ENCODE measurements at regions of chr15 and their contacts with region 1.

Region 1: GRCh38 chr15:36883713-36884517 is 216.4 kb downstream of the MEIS2 start:
- DNase-seq: peak; percentile 93
- H3K4me3 ChIP-seq: peak overlapping the region; percentile 68
- H3K27ac ChIP-seq: no peak overlapping the region
- H3K4me1 ChIP-seq: peaks cover 14% of the 10 kb centered on the region
- H3K27me3 ChIP-seq: 0 out of 2 replicates have a peak, but pooled peaks cover 11% of the 10 kb centered on the region

Region 2: DNA sequence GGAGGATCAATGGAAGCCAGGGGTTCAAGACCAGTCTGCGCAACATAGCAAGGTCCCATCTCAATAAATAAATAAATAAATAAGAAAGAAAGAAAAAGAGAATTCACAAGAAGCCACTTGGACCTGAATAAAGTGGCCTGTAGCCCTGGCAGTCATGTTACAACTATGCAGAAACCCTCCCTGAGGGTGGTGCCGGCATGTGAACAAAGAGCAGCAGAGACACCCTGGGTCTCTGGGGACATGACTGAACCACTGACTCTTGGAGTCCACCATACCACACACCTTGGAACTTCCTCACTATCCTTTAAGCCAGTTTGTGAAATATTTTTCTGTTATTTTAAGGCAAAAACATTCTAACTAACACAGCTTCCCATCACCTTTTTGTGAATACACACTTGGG is 123.4 kb after region 1 on chr15:
- in situ Hi-C with region 1: no loop called
- DNase-seq: peak; percentile 53
- H3K4me3 ChIP-seq: no peak overlapping the region
- H3K27ac ChIP-seq: no peak overlapping the region
- H3K4me1 ChIP-seq: peaks cover 11% of the 10 kb centered on the region; the same call in 1 of the 2 replicates
- H3K27me3 ChIP-seq: no peaks in the 10 kb centered on the region

Region 3: GRCh38 chr15:37100109-37100965 is 216.4 kb after region 1 on chr15 and contains the start of gene MEIS2:
- in situ Hi-C with region 1: loop called (anchors 25 kb)
- DNase-seq: peak; percentile 95
- H3K4me3 ChIP-seq: peak within 1 kb of the TSS; percentile 95
- H3K27ac ChIP-seq: peak within 1 kb of the TSS; percentile 92
- H3K4me1 ChIP-seq: peaks cover 9% of the 10 kb centered on the region; the same call in 1 of the 2 replicates
- H3K27me3 ChIP-seq: no peaks in the 10 kb centered on the region
- total RNA-seq, gene MEIS2: 23.7 and 29.3 TPM in 2 replicates

Measured in GM23248 (cell line).